PC-9 (cell line): ENCODE measurements at regions of chr4 and their contacts with region 1.

Region 1: DNA sequence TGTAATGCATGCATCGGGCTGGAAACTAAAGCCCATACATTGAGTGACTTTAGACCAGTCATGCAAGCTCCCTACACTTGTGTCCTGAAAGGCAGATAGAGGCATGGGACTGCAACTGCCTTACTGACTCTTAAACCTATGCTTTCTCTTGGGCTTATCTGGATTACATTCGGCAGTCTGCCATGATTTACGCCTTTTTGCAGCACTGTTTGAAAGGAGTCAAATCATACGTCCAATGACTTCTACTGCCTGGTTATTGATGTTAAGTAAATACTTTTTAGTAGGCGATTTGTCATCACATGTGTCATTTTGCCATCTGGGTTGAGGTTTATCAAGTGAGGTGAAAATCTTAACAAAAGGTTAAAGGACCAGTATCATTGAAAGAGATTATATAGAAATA is 31.5 kb downstream of the SORBS2 start:
- DNase-seq: no peak
- H3K4me3 ChIP-seq: no peak overlapping the region
- H3K27ac ChIP-seq: no peak overlapping the region
- H3K4me1 ChIP-seq: peaks cover 14% of the 10 kb centered on the region
- H3K27me3 ChIP-seq: no peaks in the 10 kb centered on the region
- CTCF ChIP-seq: no peak

Region 2: GRCh38 chr4:185748901-185749390 is 31.5 kb before region 1 on chr4:
- CTCF ChIA-PET with region 1: no interaction called
- POLR2A ChIA-PET with region 1: no interaction called
- intact Hi-C with region 1: no loop called
- DNase-seq: no peak
- H3K4me3 ChIP-seq: no peak overlapping the region
- H3K27ac ChIP-seq: no peak overlapping the region
- H3K4me1 ChIP-seq: no peaks in the 10 kb centered on the region
- H3K27me3 ChIP-seq: no peaks in the 10 kb centered on the region
- CTCF ChIP-seq: no peak

Region 3: GRCh38 chr4:185886832-185887524 is 106.5 kb after region 1 on chr4:
- CTCF ChIA-PET with region 1: no interaction called
- POLR2A ChIA-PET with region 1: no interaction called
- intact Hi-C with region 1: no loop called
- DNase-seq: no peak
- H3K4me3 ChIP-seq: no peak overlapping the region
- H3K27ac ChIP-seq: no peak overlapping the region
- H3K4me1 ChIP-seq: no peaks in the 10 kb centered on the region
- H3K27me3 ChIP-seq: no peaks in the 10 kb centered on the region
- CTCF ChIP-seq: no peak

Region 4: GRCh38 chr4:185924458-185925044 is 144.1 kb after region 1 on chr4:
- CTCF ChIA-PET with region 1: no interaction called
- POLR2A ChIA-PET with region 1: interaction called, 12 read pairs
- intact Hi-C with region 1: no loop called
- DNase-seq: no peak
- H3K4me3 ChIP-seq: no peak overlapping the region
- H3K27ac ChIP-seq: no peak overlapping the region
- H3K4me1 ChIP-seq: peaks cover 10% of the 10 kb centered on the region
- H3K27me3 ChIP-seq: no peaks in the 10 kb centered on the region
- CTCF ChIP-seq: no peak